Activated naive CD4-positive, alpha-beta T cell treated with anti-CD3 and anti-CD28 coated beads for 36 hours (primary cell): ENCODE measurements at regions of chr16 and their contacts with region 1.

Region 1: DNA sequence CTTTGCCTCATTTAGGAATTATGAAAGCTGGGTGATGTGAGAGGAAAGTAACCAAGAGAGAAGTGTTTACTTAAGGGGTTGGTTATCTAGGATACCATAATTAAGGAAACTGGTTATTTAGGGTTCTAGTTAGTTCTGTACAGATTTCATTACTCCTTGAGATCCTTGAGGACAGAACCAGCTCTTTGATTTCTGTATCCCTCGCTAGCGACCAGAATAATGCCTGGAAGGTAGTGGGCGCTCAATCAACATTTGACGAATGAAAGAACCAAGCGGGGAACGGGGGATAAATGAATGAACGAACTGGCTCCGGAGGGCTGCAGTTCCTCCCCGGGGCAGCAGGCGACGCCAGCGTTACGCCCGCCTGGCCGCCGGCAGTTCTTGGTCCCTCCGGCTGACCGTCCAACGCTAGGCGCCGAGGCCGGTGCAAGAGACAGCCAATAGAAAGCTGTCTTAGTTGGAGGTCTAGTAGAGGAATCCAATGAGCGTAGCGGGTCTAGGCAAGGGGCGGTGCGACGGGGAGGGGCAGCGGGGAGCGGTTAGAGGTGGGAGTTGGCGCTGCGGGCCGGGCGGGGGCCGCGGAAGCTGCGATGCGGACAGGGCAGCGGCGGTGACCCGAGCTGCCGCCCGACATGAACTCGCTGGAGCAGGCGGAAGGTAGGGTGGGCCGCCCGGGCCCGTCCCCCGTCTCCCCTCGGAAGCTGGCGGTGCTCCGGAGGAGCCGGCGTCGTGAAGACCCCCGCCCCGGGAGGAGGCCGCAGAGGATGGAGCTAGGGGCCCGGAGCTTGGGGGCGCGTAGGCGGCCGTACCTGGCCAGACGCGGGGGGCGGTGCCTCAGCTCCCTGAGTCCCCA is at the start of gene CNEP1R1:
- DNase-seq: peak; percentile 94
- H3K4me3 Mint-ChIP-seq: peak within 1 kb of the TSS; percentile 91
- H3K27ac Mint-ChIP-seq: peak within 1 kb of the TSS; percentile 82
- H3K4me1 Mint-ChIP-seq: peaks cover 22% of the 10 kb centered on the region
- H3K27me3 Mint-ChIP-seq: no peaks in the 10 kb centered on the region
- total RNA-seq, gene CNEP1R1: 28.2 to 30.9 TPM

Region 2: DNA sequence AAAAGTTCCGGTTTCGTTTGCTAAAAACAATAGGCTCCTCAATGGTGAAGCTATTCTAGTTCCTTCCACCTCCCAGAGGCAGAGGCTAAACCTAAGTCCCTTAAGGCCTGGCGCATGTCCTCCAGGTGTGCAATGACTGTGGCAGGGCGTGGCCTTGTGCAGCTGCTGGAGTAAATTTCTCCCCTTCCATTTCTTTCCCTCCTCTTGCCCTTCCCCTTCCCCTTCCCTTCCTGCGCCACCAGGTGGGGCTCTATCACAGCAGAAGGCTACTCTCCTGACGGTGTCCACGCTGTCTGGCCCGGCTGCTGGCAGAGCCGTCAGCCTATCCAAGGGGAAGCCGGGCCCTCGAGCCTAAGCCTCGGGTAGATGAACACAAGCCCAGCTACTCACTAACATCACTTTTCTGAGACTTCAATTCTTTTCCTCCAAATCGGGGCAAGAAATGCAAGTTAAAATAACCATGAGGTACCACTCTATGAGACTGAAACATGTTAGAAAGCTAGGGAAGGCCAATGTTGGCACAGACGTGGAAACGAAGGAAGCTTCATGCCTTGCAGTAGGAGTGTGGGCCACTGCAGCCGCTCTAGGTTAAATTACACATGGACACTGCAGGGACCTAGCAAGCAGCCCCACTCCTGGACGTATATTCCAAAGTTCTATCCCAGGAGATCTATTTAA is 616.9 kb before region 1 on chr16:
- CTCF ChIA-PET with region 1: no interaction called
- intact Hi-C with region 1: loop called (anchors 1 kb)
- DNase-seq: peak; percentile 85
- H3K4me3 Mint-ChIP-seq: no peak overlapping the region
- H3K27ac Mint-ChIP-seq: no peak overlapping the region
- H3K4me1 Mint-ChIP-seq: peaks cover 1% of the 10 kb centered on the region
- H3K27me3 Mint-ChIP-seq: peaks cover 4% of the 10 kb centered on the region

Region 3: DNA sequence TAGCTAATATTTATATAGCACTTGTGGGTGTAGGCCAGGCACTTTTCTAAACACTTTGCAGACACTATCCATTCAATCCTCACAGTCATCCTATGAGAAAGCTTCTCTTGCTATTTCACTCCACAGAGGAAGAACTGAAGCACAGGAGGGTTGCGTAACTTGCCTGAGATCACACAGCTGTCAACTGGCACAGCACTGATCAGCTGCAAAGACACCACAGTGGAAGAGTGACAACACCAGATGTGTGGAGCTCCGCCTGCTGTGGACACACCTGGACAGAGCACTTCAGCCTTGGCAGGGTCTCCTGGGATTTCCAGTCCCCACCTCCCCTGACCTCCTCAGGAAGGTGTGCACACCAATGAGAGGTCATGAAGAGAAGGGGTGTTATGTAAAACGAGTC is 13.2 kb before region 1 on chr16:
- CTCF ChIA-PET with region 1: no interaction called
- intact Hi-C with region 1: no loop called
- DNase-seq: no peak
- H3K4me3 Mint-ChIP-seq: no peak overlapping the region
- H3K27ac Mint-ChIP-seq: no peak overlapping the region
- H3K4me1 Mint-ChIP-seq: no peaks in the 10 kb centered on the region
- H3K27me3 Mint-ChIP-seq: no peaks in the 10 kb centered on the region

Region 4: DNA sequence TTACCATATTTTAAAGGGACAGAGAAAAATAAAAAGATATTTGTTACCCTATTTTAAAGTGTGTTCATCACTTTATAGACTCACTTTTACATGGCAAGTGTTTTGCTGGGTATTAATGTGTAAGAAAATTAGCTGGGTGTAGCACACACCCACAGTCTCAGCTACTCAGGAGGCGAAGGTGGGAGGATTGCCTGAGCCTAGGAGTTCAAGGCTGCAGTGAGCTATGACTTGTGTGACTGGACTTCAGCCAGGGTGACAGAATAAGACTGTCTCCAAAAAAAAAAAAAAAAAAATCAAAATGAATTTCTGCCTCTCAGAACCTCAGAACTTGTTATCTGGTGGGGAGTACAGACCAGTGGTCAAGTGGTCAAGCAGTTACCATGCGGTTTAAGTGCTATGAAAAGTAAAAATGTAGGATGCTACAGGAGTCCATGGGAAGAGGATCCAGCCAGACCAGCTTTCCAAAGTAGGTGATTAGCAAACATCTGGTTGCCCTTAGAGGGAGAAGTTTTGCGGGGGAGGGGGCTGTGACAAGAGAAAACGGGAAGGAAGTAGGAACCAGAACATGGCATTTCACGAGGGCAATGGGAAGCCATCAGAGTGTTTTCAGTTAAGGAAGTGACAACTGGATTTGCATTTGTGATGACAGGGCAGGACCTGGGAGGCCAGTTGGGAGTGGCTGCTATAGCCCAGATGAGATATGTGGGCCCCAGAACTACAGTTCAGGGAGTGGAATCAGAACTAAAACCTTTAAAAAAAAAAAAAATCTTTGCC is 14.0 kb after region 1 on chr16:
- CTCF ChIA-PET with region 1: interaction called, 12 read pairs
- intact Hi-C with region 1: no loop called
- DNase-seq: no peak
- H3K4me3 Mint-ChIP-seq: no peak overlapping the region
- H3K27ac Mint-ChIP-seq: no peak overlapping the region
- H3K4me1 Mint-ChIP-seq: peaks cover 14% of the 10 kb centered on the region
- H3K27me3 Mint-ChIP-seq: peaks cover 5% of the 10 kb centered on the region

Region 5: GRCh38 chr16:50065624-50066481 is 40.9 kb after region 1 on chr16 and contains the start of gene HEATR3:
- CTCF ChIA-PET with region 1: interaction called, 45 read pairs
- intact Hi-C with region 1: loop called (anchors 1 kb)
- DNase-seq: peak; percentile 96
- H3K4me3 Mint-ChIP-seq: peak within 1 kb of the TSS; percentile 86
- H3K27ac Mint-ChIP-seq: peak within 1 kb of the TSS; percentile 81
- H3K4me1 Mint-ChIP-seq: peaks cover 27% of the 10 kb centered on the region
- H3K27me3 Mint-ChIP-seq: no peaks in the 10 kb centered on the region
- total RNA-seq, gene HEATR3: 16.3 to 17.5 TPM

Region 6: DNA sequence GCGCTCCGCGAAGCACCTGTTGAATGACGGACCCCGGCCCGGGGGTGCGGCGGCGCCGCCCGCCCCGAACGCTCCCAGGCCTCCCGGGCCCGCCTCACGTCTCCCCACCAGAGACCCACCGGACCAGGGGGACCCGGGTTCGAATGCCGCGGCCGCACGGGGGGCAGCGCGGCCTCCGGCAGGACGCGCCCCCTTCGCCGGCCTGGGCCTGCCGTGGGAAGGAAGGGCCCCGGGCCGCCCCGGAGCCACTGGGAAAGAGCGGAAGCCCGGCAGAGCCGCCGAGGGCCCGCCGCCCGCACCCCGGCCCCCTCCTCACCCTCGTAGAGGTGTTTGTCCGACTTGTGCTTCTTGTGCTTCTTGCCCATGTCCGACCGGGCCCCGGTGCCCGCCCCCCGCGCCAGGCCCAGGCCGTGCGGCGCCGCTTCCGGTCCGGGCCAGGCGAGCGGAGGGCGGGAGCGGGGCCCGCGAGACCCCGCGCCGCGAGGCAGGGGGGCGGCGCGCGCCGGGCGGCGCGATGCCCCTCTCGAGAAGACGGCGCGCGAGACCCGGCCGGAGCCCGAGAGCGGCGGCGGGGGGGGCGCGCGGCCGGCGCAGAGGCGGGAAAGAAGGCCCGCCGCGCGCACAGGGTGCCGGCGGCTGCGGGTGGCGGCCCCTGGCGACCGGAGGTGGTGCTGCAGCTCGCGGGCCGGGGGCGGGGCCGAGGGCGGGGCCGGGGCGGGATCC is 343.7 kb after region 1 on chr16 and contains the start of gene BRD7:
- CTCF ChIA-PET with region 1: interaction called, 8 read pairs
- intact Hi-C with region 1: loop called (anchors 2 kb)
- DNase-seq: peak; percentile 62
- H3K4me3 Mint-ChIP-seq: peak within 1 kb of the TSS; percentile 96
- H3K27ac Mint-ChIP-seq: peak within 1 kb of the TSS; percentile 86
- H3K4me1 Mint-ChIP-seq: peaks cover 46% of the 10 kb centered on the region
- H3K27me3 Mint-ChIP-seq: no peaks in the 10 kb centered on the region
- total RNA-seq, gene BRD7: 96.7 to 101 TPM